B cell (primary cell): ENCODE measurements at regions of chr7 and their contacts with region 1.

Region 1: GRCh38 chr7:48540746-48541145 is 369.5 kb downstream of the ABCA13 start:
- DNase-seq: no peak
- ATAC-seq: no peak
- H3K4me3 ChIP-seq: no peak overlapping the region
- H3K4me3 Mint-ChIP-seq: no peak overlapping the region
- H3K27ac ChIP-seq: no peak overlapping the region
- H3K27ac Mint-ChIP-seq: no peak overlapping the region
- H3K4me1 ChIP-seq: no peaks in the 10 kb centered on the region
- H3K4me1 Mint-ChIP-seq: no peaks in the 10 kb centered on the region
- H3K27me3 ChIP-seq: no peaks in the 10 kb centered on the region
- H3K27me3 Mint-ChIP-seq: no peaks in the 10 kb centered on the region
- CTCF ChIP-seq: no peak

Region 2: DNA sequence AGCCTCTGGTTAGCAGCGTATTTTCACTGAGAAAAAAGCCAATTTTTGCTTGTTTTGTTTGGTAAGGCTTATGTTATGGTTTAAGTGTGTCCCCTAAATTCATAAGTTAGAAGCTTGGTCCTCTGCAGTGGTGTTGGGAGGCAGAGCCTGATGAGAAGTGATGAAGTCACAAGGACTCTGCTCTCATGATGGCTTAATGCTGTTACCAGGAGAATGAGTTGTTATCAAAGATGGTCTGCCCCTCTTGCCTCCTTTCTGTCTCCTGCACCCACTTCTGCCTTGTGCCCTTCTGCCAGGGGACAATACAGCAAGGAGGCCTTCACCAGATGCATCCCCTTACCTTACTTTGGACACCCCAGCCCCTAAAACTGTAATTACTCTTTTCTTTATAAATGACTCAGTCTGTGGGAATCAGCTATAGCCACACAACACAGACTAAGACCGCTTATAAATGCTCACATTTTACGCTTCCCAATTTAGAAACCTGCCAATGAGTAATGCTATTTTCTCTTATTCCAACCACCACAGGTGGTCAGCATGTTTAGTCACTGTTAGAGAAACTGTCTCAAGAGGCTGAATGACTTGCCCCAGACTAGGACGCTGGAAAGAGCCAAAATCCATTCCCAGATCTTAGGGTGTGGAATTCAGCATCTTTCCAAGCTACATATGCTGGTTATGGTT is 586.4 kb before region 1 on chr7:
- CTCF ChIA-PET with region 1: no interaction called
- POLR2A ChIA-PET with region 1: no interaction called
- intact Hi-C with region 1: no loop called
- DNase-seq: no peak
- ATAC-seq: no peak
- H3K4me3 ChIP-seq: no peak overlapping the region
- H3K4me3 Mint-ChIP-seq: no peak overlapping the region
- H3K27ac ChIP-seq: no peak overlapping the region
- H3K27ac Mint-ChIP-seq: no peak overlapping the region
- H3K4me1 ChIP-seq: no peaks in the 10 kb centered on the region
- H3K4me1 Mint-ChIP-seq: no peaks in the 10 kb centered on the region
- H3K27me3 ChIP-seq: no peaks in the 10 kb centered on the region
- H3K27me3 Mint-ChIP-seq: no peaks in the 10 kb centered on the region
- CTCF ChIP-seq: no peak

Region 3: DNA sequence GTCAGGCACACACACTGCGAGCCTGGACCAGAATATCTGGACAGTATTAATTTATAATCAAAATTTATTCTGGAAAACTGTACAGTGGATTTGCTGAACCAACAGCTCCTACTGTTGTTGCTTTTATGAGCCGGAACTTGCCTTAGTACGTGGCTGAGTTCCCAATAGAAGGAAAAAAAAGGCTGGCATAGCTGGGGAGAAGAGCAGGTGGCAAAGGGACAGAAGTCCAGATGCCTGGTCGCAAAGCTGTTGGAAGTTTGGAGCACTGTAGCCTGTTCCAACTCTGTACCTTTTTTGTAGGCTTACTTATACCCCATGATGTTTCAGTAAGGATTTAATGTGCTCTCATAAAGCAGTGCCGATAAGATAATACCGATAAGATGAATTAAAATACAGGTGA is 35.7 kb before region 1 on chr7:
- CTCF ChIA-PET with region 1: no interaction called
- POLR2A ChIA-PET with region 1: no interaction called
- intact Hi-C with region 1: no loop called
- DNase-seq: no peak
- ATAC-seq: no peak
- H3K4me3 ChIP-seq: no peak overlapping the region
- H3K4me3 Mint-ChIP-seq: no peak overlapping the region
- H3K27ac ChIP-seq: no peak overlapping the region
- H3K27ac Mint-ChIP-seq: no peak overlapping the region
- H3K4me1 ChIP-seq: no peaks in the 10 kb centered on the region
- H3K4me1 Mint-ChIP-seq: no peaks in the 10 kb centered on the region
- H3K27me3 ChIP-seq: no peaks in the 10 kb centered on the region
- H3K27me3 Mint-ChIP-seq: no peaks in the 10 kb centered on the region
- CTCF ChIP-seq: no peak

Region 4: DNA sequence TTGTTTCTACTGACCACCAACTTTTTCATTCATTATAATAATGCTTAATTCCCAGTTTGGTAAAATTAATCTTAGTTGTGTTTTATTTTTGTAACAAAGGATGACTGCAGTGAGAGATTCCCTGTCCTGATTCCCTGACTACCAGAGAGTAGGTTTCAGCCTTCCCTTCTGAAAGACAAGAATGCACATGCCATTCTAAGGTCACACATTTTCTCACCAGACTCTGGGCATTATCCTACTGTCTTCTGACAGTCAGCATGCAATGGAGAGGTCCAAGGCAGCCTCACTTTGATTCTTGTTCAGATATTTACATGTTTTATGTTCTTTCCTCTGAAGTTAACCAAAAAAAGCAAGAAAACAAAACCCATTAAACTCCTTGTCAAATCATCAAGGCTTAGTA is 10.9 kb after region 1 on chr7:
- CTCF ChIA-PET with region 1: no interaction called
- POLR2A ChIA-PET with region 1: no interaction called
- intact Hi-C with region 1: loop called (anchors 1 kb)
- DNase-seq: no peak
- ATAC-seq: no peak
- H3K4me3 ChIP-seq: no peak overlapping the region
- H3K4me3 Mint-ChIP-seq: no peak overlapping the region
- H3K27ac ChIP-seq: no peak overlapping the region
- H3K27ac Mint-ChIP-seq: no peak overlapping the region
- H3K4me1 ChIP-seq: no peaks in the 10 kb centered on the region
- H3K4me1 Mint-ChIP-seq: no peaks in the 10 kb centered on the region
- H3K27me3 ChIP-seq: no peaks in the 10 kb centered on the region
- H3K27me3 Mint-ChIP-seq: no peaks in the 10 kb centered on the region
- CTCF ChIP-seq: no peak